H1 (cell line): ENCODE measurements at regions of chr2 and their contacts with region 1.

Region 1: DNA sequence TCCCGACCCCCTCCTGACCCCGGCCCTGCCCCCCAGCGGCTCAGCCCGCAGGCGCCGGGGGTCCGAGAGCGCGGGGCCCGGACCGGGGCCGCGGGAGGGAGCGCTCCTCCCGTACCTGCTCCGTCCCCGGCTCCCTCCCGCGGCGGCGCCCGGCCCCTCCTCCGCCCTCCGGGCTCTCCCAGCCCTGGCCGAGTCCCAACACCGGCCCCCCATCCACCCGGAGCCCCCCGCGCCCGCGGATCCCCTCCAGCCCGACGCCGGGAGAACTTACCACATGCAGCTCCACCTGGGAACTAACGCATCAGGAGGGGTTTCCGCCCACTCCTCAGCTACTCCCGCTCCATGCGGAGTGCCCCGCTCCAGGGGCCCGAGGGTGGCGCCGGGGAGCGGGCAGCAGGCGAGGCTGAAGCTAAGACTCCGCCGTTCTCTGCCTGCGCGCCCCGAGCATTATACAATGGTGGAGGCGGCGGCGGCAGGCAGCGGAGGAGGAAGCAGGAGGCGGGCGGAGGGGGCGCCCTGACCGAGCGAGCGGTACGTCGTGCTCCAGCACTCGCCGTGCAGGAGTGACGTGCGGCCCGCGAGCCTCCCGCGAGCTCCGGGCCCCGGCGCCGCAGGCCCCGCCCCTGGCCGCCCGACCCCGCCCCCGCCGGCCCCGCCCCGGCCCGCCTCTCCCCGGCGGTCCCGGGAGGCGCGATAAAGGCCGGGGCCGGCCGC is at the start of gene SERTAD2:
- DNase-seq: peak; percentile 27 to 85
- H3K4me3 ChIP-seq: peak within 1 kb of the TSS; percentile 79 to 95 (median 85)
- H3K27ac ChIP-seq: peak within 1 kb of the TSS; percentile 73; the same call in 1 of the 2 replicates
- H3K4me1 ChIP-seq: peaks cover 3 to 14% (median 10%) of the 10 kb centered on the region in 4 experiments
- H3K27me3 ChIP-seq: peaks cover 2 to 21% (median 12%) of the 10 kb centered on the region in 4 experiments; a peak in 6 of 7 replicates
- CTCF ChIP-seq: no peak
- EP300 ChIP-seq: no peak
- POLR2A ChIP-seq: peak; percentile 40 to 78; a peak in 2 of 3 replicates
- RAD21 ChIP-seq: peak in 1 of 2 experiments; percentile 2; a peak in 1 of 4 replicates
- total RNA-seq, gene SERTAD2: 4.5 and 5.7 TPM in 2 replicates

Region 2: DNA sequence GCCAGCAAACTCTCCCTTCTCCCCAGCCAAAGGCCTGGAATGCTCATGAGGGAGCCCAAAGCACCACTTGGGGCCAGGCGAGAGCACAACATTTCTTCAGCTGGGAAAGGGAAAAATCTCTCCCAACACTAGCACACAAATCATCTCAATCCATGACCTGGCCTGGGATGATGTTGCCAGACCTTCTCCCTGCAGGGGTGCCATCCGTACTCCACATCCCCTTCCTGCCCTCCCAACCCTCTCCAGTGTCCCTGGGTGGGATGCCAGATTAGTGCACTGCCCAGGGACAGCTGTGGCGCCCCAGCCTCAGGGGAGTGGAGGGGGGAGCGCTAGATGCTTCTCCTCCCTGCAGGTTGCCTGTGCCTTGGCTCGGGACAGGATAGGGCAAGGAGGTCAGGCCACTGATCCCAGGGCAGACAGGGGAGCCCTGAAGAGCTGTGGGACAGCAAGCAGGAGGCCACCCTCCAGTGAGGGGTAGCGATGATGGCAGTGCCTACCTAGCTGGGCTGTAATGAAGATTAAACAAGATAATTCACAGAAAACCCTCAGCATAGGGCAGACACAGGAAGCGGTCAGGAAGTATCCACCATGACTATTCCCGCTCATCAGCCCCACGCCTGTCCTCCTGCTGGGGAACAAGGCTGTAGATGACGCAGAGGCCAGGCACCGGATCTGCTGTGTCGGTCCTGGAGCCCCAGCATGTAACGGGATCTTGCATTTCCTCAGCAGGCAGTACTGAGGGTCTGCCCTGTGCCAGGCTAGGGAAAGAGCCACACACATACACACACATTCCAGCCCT is 30.9 kb before region 1 on chr2:
- CTCF ChIA-PET with region 1: interaction called, 389 read pairs
- POLR2A ChIA-PET with region 1: interaction called, 5 read pairs
- DNase-seq: peak in 1 of 2 experiments; percentile 53
- H3K4me3 ChIP-seq: no peak overlapping the region
- H3K27ac ChIP-seq: no peak overlapping the region
- H3K4me1 ChIP-seq: peaks cover 3 to 21% (median 13%) of the 10 kb centered on the region in 4 experiments; a peak in 6 of 7 replicates
- H3K27me3 ChIP-seq: no peaks in the 10 kb centered on the region
- CTCF ChIP-seq: peak; percentile 28 to 48 (median 43)
- EP300 ChIP-seq: no peak
- POLR2A ChIP-seq: no peak
- RAD21 ChIP-seq: peak; percentile 39 to 44

Region 3: DNA sequence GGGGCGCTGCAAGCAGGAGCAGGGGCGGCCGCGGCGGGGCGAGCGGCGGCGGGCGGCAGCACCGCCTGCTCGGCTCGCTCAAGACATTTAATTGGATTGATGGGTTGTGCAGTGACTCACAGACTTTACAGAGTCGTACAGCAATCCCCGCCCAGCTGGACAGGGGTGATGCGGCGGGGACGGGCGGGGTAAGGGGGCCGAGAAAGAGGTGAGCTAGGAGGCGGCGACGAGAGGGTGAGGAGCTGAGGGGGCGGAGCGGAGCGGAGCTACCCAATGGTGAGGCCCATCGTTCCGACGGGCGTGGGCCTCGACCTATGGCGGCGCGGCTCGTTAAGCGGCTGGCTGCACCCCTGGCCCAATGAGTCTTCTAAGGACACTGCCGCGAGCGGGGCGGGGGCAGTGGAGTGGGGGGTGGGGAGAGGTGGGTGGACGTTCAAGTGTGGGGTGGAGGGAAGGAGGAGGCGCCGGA is 97.3 kb after region 1 on chr2:
- CTCF ChIA-PET with region 1: interaction called, 4 read pairs
- POLR2A ChIA-PET with region 1: interaction called, 15 read pairs
- DNase-seq: peak; percentile 96
- H3K4me3 ChIP-seq: peak overlapping the region; percentile 88 to 93 (median 88)
- H3K27ac ChIP-seq: peak overlapping the region; percentile 2; the same call in 1 of the 2 replicates
- H3K4me1 ChIP-seq: peaks cover 0 to 4% (median 2%) of the 10 kb centered on the region in 4 experiments; a peak in 3 of 7 replicates
- H3K27me3 ChIP-seq: peaks cover 0 to 12% (median 6%) of the 10 kb centered on the region in 4 experiments; a peak in 3 of 7 replicates
- CTCF ChIP-seq: no peak
- EP300 ChIP-seq: no peak
- POLR2A ChIP-seq: peak in 1 of 2 experiments; percentile 42; a peak in 1 of 3 replicates
- RAD21 ChIP-seq: peak in 1 of 2 experiments; percentile 14; a peak in 1 of 4 replicates

Region 4: GRCh38 chr2:64865073-64865830 is 211.7 kb after region 1 on chr2:
- CTCF ChIA-PET with region 1: interaction called, 22 read pairs
- POLR2A ChIA-PET with region 1: interaction called, 11 read pairs
- DNase-seq: peak in 1 of 2 experiments; percentile 78
- H3K4me3 ChIP-seq: peak overlapping the region; percentile 39 to 80 (median 54)
- H3K27ac ChIP-seq: no peak overlapping the region
- H3K4me1 ChIP-seq: peaks cover 0 to 7% (median 6%) of the 10 kb centered on the region in 4 experiments
- H3K27me3 ChIP-seq: peaks cover 3 to 37% (median 32%) of the 10 kb centered on the region in 4 experiments
- CTCF ChIP-seq: peak; percentile 67 to 76 (median 68)
- EP300 ChIP-seq: no peak
- POLR2A ChIP-seq: no peak
- RAD21 ChIP-seq: peak; percentile 45 to 81; a peak in 3 of 4 replicates